GM10248 (cell line): ENCODE measurements at regions of chr20 and their contacts with region 1.

Region 1: DNA sequence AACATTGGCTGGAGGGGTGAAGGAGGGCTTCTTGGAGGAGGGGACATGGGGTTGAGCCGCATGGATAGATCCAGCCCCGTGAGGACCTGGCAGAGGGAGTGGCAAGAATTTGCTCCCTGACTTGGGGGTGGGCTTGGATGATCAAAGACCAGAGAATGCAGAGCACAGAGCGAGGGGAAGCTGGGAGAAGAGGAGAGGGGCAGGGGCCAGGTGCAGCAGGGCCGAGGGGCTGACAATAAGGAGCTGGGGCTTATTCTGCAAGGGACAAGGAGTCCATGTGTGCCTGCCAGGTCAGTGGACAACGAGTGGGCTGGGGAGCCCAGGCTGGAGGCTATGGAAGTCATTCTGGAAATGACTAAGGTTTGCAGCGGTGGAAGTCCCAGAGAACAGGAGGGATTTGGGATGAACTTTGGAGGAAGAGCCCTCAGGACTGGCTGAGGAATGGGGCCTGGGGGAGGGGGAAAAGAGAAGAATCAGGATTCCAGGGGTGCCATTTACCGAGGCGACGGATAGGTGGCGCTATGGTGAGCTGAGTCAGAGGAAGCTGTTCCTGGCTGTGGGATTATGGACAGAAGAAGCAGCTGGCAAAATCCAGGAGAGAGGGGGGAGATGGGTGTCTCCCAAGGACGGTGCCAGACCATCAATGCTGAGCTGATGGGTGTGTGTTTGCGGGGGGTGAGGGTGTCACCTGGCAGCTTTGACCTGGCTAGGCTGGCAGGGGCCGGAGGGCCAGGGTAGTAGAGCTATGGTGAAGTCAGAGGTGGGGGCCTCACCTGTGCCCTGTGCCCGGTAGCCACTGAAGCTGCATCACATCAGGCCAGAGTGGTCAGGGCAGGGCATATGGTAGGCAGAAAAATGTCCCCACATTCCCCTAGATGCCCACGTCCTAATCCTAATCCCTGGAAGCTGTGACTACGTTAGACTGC is 7.8 kb downstream of the KCNG1 start:
- DNase-seq: peak; percentile 52
- CTCF ChIP-seq: peak; percentile 44

Region 2: GRCh38 chr20:51029963-51030920 is 15.2 kb after region 1 on chr20:
- CTCF ChIA-PET with region 1: interaction called, 25 read pairs
- POLR2A ChIA-PET with region 1: no interaction called
- DNase-seq: no peak
- CTCF ChIP-seq: no peak

Region 3: DNA sequence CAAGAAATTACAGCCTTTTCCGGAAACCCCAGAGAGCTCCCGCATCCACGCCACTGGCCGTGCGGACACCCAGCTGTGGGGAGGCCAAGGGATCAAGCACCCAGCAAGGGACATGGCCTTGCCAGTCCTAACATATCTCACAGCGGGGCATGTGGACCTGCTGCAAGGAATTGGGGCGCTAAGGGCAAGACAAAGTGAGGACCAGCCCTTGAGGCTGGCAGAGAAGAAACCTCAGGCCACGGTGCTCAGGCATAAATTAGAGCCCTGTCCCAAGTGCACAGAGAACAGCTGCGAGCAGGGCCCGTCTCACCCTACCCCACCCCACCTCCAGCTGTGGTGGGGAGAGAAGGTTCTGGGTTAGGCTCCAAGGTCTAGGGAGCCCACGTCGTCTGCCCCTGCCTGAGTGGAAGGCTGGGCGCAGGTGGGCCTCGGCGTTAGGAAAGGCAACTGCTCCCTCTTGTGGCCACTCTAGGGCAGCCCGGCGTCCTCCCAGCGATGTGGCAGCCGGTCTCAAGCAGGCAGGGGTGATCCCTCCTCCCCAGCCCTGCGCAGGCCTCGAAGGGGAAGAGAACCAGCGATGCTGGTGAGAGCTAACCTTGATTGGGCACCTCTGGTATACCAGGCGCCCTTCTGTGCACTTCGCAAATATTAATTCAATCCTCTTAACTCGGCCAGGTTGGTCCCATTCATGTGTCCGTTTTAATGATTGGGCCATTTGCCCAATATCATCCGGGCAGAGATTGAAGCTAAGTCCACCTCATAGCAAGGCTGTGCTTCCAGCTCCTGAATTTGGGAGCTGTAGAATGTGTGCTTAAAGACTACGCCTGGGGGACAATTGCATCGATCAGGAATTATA is 291.7 kb after region 1 on chr20:
- CTCF ChIA-PET with region 1: interaction called, 14 read pairs
- POLR2A ChIA-PET with region 1: no interaction called
- DNase-seq: peak; percentile 87
- CTCF ChIP-seq: peak; percentile 96